ENCODE measurements at regions of chr14 and their contacts with region 1.

Region 1: DNA sequence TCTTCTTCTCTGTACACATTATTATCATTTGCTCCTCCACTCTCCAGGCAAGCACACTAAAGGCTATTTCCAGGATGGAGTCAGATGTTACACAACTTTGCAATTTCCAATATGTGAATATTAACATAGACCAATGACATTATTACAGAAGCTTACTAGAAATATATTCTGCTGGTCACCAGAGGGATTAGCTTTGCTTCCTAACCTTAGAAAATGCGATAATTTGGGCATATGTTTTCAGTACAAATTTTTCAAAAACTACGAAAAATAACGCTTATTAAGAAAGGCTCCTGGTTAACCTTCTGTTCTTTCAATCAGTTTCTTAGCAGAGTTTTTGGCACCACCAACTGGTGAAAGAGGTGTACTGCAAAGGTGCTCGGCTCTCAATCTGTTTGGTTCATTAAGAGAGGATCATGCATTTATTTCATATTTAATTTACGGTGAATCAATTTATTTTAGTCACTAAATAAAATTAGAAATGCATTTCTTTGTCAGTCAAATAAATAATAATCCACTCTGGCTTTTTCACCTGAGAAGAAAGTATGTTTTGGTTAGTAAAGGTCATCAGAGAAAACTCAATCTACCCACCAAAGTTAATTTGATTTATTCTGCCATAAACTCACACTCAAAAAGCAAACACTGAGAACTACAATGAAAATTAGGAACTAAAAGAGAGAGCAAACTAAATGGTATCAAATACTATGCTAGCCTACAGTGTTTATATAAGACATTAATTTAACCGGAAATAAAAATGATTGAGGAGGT is 39.2 kb downstream of the EFCAB11 start:
- DNase-seq: peak; percentile 69
- H3K4me3 Mint-ChIP-seq: no peak overlapping the region
- H3K27ac Mint-ChIP-seq: no peak overlapping the region
- H3K4me1 Mint-ChIP-seq: peaks cover 3% of the 10 kb centered on the region
- H3K27me3 Mint-ChIP-seq: peaks cover 2% of the 10 kb centered on the region

Region 2: GRCh38 chr14:89027097-89027740 is 888.1 kb before region 1 on chr14:
- CTCF ChIA-PET with region 1: interaction called, 11 read pairs
- POLR2A ChIA-PET with region 1: no interaction called
- intact Hi-C with region 1: loop called (anchors 1 kb)
- DNase-seq: peak; percentile 60
- H3K4me3 Mint-ChIP-seq: peak overlapping the region; percentile 50
- H3K27ac Mint-ChIP-seq: no peak overlapping the region
- H3K4me1 Mint-ChIP-seq: peaks cover 2% of the 10 kb centered on the region
- H3K27me3 Mint-ChIP-seq: peaks cover 63% of the 10 kb centered on the region

Region 3: DNA sequence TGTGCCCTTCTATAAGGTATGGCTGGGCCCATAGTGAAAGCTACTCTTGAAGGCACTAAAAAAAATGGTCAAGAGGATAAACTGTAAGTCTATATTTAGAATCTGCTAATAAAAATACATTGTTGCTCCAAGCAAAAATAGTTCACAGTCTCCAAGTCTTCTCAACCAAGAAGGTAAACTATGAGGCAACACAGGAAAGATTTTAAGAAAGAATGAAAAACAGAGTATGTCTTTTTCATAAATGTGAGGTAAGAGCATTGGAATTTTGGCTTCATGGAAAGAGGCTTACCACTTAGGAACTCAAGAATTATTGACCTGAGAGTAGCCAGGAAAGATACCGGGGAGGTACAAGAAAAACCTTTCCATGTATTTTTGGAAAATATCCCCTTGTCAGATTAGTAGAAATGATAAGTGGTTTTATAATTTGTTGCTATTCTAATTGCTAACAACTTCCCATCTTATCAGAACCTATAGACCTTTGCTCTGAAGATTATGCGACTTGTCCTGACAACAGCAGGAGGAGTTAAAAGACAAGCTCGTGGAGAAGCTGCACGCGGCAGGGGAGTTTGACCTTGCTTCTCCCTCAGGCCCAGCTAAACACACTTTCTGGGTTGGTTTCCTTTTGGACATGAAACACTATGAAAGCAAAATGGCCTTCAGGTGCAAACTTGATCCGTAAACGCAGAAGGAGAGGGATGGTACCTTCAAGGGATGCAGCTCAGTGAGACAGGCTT is 736.3 kb before region 1 on chr14:
- CTCF ChIA-PET with region 1: interaction called, 5 read pairs
- POLR2A ChIA-PET with region 1: no interaction called
- intact Hi-C with region 1: loop called (anchors 1 kb)
- DNase-seq: no peak
- H3K4me3 Mint-ChIP-seq: no peak overlapping the region
- H3K27ac Mint-ChIP-seq: no peak overlapping the region
- H3K4me1 Mint-ChIP-seq: peaks cover 8% of the 10 kb centered on the region
- H3K27me3 Mint-ChIP-seq: no peaks in the 10 kb centered on the region

Region 4: GRCh38 chr14:89773644-89774316 is 141.5 kb before region 1 on chr14:
- CTCF ChIA-PET with region 1: interaction called, 3 read pairs
- POLR2A ChIA-PET with region 1: no interaction called
- intact Hi-C with region 1: loop called (anchors 5 kb)
- DNase-seq: peak; percentile 76
- H3K4me3 Mint-ChIP-seq: peak overlapping the region; percentile 29
- H3K27ac Mint-ChIP-seq: peak overlapping the region; percentile 38
- H3K4me1 Mint-ChIP-seq: peaks cover 15% of the 10 kb centered on the region
- H3K27me3 Mint-ChIP-seq: peaks cover 7% of the 10 kb centered on the region

Region 5: GRCh38 chr14:90179809-90180779 is 264.8 kb after region 1 on chr14:
- CTCF ChIA-PET with region 1: no interaction called
- POLR2A ChIA-PET with region 1: no interaction called
- intact Hi-C with region 1: no loop called
- DNase-seq: no peak
- H3K4me3 Mint-ChIP-seq: no peak overlapping the region
- H3K27ac Mint-ChIP-seq: no peak overlapping the region
- H3K4me1 Mint-ChIP-seq: no peaks in the 10 kb centered on the region
- H3K27me3 Mint-ChIP-seq: peaks cover 6% of the 10 kb centered on the region

Measured in activated CD4-positive, alpha-beta memory T cell treated with anti-CD3 and anti-CD28 coated beads for 36 hours (primary cell).